ENCODE measurements at regions of chr1 and their contacts with region 1.

Region 1: GRCh38 chr1:93692983-93693591 is 11.4 kb upstream of the BCAR3 start:
- DNase-seq: peak; percentile 63
- ATAC-seq: peak; percentile 88
- H3K4me3 ChIP-seq: no peak overlapping the region
- H3K27ac ChIP-seq: peak overlapping the region; percentile 30
- H3K4me1 ChIP-seq: peaks cover 44% of the 10 kb centered on the region
- H3K27me3 ChIP-seq: no peaks in the 10 kb centered on the region
- CTCF ChIP-seq: no peak
- EP300 ChIP-seq: peak in 1 of 2 experiments; percentile 14; a peak in 1 of 4 replicates
- POLR2A ChIP-seq: no peak
- RAD21 ChIP-seq: no peak

Region 2: DNA sequence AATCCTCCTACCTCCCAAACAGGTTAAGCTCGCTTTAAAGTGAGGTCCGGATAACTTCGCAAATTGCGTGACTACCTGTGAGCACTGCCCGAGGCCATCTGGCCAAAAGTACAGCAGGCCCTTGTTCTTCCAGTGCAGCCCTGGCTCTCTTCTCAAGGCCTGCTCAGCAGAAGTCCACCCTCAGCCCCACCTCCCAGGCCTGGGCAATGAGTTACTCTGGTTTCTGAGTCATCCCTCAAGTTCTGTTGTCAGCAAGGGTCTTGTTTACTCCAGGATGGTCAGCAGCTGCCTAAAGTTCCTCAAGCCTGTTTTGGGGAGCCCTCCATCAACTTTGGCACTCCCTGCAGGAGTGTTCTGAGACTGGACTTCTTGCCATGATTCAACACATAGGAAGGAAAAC is 113.2 kb before region 1 on chr1:
- CTCF ChIA-PET with region 1: no interaction called
- POLR2A ChIA-PET with region 1: no interaction called
- RAD21 ChIA-PET with region 1: no interaction called
- SMC1A ChIA-PET with region 1: no interaction called
- in situ Hi-C with region 1: no loop called
- intact Hi-C with region 1: no loop called
- DNase-seq: no peak
- ATAC-seq: no peak
- H3K4me3 ChIP-seq: no peak overlapping the region
- H3K27ac ChIP-seq: no peak overlapping the region
- H3K4me1 ChIP-seq: no peaks in the 10 kb centered on the region
- H3K27me3 ChIP-seq: no peaks in the 10 kb centered on the region
- CTCF ChIP-seq: no peak
- EP300 ChIP-seq: no peak
- POLR2A ChIP-seq: no peak
- RAD21 ChIP-seq: no peak

Region 3: GRCh38 chr1:93680757-93681550 is 12.1 kb before region 1 on chr1:
- CTCF ChIA-PET with region 1: interaction called, 16 read pairs
- POLR2A ChIA-PET with region 1: interaction called, 11 read pairs
- RAD21 ChIA-PET with region 1: interaction called, 9 read pairs
- SMC1A ChIA-PET with region 1: interaction called, 15 read pairs
- in situ Hi-C with region 1: no loop called
- intact Hi-C with region 1: no loop called
- DNase-seq: no peak
- ATAC-seq: peak; percentile 82
- H3K4me3 ChIP-seq: peak overlapping the region; percentile 87
- H3K27ac ChIP-seq: no peak overlapping the region
- H3K4me1 ChIP-seq: peaks cover 13% of the 10 kb centered on the region; the same call in 1 of the 2 replicates
- H3K27me3 ChIP-seq: peaks cover 0 to 4% of the 10 kb centered on the region in 2 experiments; a peak in 2 of 4 replicates
- CTCF ChIP-seq: peak; percentile 46 to 66 (median 52); a peak in 5 of 6 replicates
- EP300 ChIP-seq: no peak
- POLR2A ChIP-seq: no peak
- RAD21 ChIP-seq: peak; percentile 51; the same call in 1 of the 2 replicates

Region 4: GRCh38 chr1:93708734-93709481 is 15.8 kb after region 1 on chr1:
- CTCF ChIA-PET with region 1: interaction called, 19 read pairs
- POLR2A ChIA-PET with region 1: interaction called, 38 read pairs
- RAD21 ChIA-PET with region 1: interaction called, 69 read pairs
- SMC1A ChIA-PET with region 1: interaction called, 137 read pairs
- in situ Hi-C with region 1: no loop called
- intact Hi-C with region 1: loop called (anchors 1 kb)
- DNase-seq: no peak
- ATAC-seq: peak; percentile 22
- H3K4me3 ChIP-seq: peak overlapping the region; percentile 23; the same call in 1 of the 2 replicates
- H3K27ac ChIP-seq: peak overlapping the region; percentile 69
- H3K4me1 ChIP-seq: peaks cover 61% of the 10 kb centered on the region
- H3K27me3 ChIP-seq: no peaks in the 10 kb centered on the region
- CTCF ChIP-seq: no peak
- EP300 ChIP-seq: no peak
- POLR2A ChIP-seq: no peak
- RAD21 ChIP-seq: no peak

Measured in GM12878 (cell line).